ENCODE measurements at regions of chr12 and their contacts with region 1.

Region 1: DNA sequence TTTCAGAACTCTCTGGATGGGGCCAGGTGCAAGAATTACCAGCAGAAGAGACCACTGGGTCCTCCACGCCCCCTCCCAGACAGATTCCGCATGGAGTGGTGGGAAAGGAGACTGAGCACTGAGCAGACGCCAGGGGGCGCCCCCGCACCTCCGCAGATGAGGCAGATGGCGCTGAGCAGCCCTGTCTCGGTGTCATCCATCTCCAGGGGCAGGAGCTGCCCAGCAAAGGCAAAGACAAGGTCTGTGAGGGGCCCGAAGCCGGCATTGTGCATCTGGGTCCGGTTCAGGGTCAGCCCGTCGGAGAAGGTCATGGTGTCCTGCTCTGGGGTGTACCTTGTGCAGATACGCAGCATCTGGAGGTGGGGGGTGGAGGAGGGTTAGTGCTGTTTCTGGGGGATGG is 6.3 kb upstream of the ITGB7 start:
- H3K4me3 Mint-ChIP-seq: no peak overlapping the region
- H3K27ac Mint-ChIP-seq: no peak overlapping the region
- H3K4me1 Mint-ChIP-seq: peaks cover 76% of the 10 kb centered on the region
- H3K27me3 Mint-ChIP-seq: no peaks in the 10 kb centered on the region

Region 2: DNA sequence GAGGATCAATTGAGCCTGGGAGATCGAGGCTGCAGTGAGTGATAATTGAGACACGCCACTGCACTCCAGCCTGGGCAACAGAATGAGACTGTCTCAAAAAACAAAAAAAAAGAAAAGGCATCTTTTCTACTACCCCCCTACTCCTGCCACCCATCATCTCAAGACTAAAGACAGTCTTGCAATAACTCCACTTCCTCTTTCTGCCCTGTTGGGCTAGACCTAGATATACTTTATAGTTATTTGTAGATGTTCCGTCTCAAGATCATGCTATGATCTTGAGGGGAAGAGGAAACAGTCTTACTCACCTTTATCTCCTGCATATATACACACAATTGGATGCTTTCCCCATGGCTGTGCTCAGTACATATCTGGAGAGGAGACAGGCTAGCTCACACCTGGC is 42.6 kb after region 1 on chr12:
- intact Hi-C with region 1: no loop called
- H3K4me3 Mint-ChIP-seq: no peak overlapping the region
- H3K27ac Mint-ChIP-seq: no peak overlapping the region
- H3K4me1 Mint-ChIP-seq: peaks cover 54% of the 10 kb centered on the region
- H3K27me3 Mint-ChIP-seq: no peaks in the 10 kb centered on the region

Region 3: DNA sequence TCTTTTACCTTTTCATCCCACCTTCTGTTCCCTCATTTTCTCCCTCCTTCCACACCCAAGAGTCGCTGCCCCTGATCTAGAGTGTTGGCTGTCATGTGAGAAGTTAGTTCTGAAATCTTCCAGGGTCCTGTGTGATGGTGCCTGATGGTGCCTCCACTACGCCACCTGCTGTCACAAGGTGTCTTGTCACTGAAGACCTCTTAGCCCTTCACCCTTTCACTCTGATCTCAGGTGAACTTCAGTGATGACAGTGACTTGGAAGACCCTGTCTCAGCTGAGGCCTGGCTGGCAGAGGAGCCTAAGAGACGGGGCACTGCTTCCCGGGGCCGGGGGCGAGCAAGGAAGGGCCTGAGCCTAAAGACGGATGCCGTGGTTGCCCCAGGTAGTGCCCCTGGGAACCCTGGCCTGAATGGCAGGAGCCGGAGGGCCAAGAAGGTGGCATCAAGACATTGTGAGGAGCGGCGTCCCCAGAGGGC is 74.4 kb after region 1 on chr12:
- intact Hi-C with region 1: loop called (anchors 1 kb)
- H3K4me3 Mint-ChIP-seq: no peak overlapping the region
- H3K27ac Mint-ChIP-seq: peak overlapping the region; percentile 67
- H3K4me1 Mint-ChIP-seq: peaks cover 22% of the 10 kb centered on the region
- H3K27me3 Mint-ChIP-seq: no peaks in the 10 kb centered on the region

Measured in dendritic cell treated with granulocyte-macrophage colony-stimulating factor and Interleukin-4, amounts not matched to agents 40 ng/mL and 50 ng/mL, for 4 days (primary cell).